Adrenal gland (tissue), 19 donors: ENCODE measurements at regions of chr15 and their contacts with region 1.

Region 1: GRCh38 chr15:45468294-45468693 is 54.3 kb downstream of the SLC30A4 start:
- DNase-seq: no peak
- H3K4me3 ChIP-seq: no peak overlapping the region
- H3K27ac ChIP-seq: no peak overlapping the region
- H3K4me1 ChIP-seq: no peaks in the 10 kb centered on the region
- H3K27me3 ChIP-seq: peaks cover 6% of the 10 kb centered on the region
- CTCF ChIP-seq: no peak
- POLR2A ChIP-seq: no peak

Region 2: GRCh38 chr15:45338417-45338816 is 129.9 kb before region 1 on chr15:
- intact Hi-C with region 1: no loop called
- DNase-seq: no peak
- H3K4me3 ChIP-seq: no peak overlapping the region
- H3K27ac ChIP-seq: no peak overlapping the region
- H3K4me1 ChIP-seq: no peaks in the 10 kb centered on the region
- H3K27me3 ChIP-seq: no peaks in the 10 kb centered on the region
- CTCF ChIP-seq: no peak
- POLR2A ChIP-seq: no peak

Region 3: GRCh38 chr15:45510758-45511280 is 42.5 kb after region 1 on chr15:
- intact Hi-C with region 1: loop called in 1 of 2 experiments (anchors 10 kb)
- DNase-seq: no peak
- H3K4me3 ChIP-seq: no peak overlapping the region
- H3K27ac ChIP-seq: no peak overlapping the region
- H3K4me1 ChIP-seq: no peaks in the 10 kb centered on the region
- H3K27me3 ChIP-seq: no peaks in the 10 kb centered on the region
- CTCF ChIP-seq: no peak
- POLR2A ChIP-seq: no peak